Ovary (tissue), 10 donors: ENCODE measurements at regions of chr3 and their contacts with region 1.

Region 1: DNA sequence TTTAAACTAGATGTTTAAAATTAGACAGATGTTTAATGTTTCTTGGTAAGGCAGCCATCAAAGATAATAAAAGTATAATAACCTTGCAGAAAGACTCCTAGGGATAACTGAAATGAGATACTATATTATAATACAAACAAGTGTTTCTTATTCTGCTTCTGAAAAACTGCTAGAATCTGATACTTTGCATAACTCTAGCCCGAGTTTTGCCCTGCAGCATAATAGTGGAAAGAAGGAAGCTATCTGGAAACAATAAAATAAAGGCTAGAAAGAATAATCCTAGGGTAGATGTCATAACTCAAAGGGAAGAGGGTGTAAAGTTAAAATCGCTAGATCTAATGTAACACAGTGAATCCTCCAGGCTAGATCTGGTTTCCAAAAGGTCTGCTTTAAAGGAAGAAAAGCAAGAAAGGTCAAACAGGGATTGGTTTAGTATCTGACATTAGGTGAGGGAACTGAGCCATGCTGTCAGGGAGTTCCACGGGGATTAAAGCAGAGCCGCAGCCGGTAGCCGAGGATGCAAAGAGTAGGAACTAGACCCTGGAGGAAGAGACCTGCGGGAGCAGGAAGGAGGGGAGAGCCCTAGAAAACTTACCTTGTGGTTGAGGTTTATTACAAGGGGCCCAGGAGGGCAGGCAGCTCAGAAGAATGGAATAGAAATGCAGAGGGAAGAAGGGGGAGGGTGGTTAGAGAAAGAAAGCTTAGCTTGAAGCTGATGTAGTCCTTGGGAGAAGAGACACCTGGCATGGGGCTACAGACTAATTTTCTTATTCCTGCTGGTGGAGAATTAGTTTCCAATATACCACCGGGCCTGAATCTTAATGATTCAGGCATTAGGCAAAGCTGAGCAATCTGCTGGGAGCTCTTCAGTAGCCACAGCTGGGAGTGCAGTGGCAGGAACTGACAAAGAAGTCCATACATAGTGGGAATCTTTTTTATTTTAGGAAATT is 46.1 kb upstream of the TUSC7 start:
- DNase-seq: no peak
- H3K4me3 ChIP-seq: no peak overlapping the region
- H3K27ac ChIP-seq: no peak overlapping the region
- H3K4me1 ChIP-seq: no peaks in the 10 kb centered on the region
- H3K27me3 ChIP-seq: no peaks in the 10 kb centered on the region
- CTCF ChIP-seq: no peak
- EP300 ChIP-seq: no peak
- POLR2A ChIP-seq: no peak

Region 2: DNA sequence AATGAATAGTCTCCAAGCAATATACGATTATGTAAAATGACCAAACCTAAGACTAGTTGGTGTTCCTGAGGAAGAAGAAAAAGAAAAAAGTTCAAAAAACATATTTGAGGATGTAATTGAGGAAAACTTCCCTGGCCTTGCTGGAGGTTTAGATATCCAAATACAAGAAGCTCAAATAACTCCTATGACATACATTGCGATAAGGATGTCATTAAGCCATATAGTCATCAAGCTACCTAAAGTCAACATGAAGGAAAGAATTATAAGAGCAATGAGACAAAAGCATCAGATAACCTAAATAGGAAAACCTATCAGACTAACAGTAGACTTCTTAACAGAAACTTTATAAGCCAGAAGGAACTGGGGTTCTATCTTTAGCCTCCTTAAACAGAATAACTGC is 277.3 kb after region 1 on chr3:
- intact Hi-C with region 1: loop called in 1 of 4 experiments (anchors 5 kb)
- DNase-seq: no peak
- H3K4me3 ChIP-seq: no peak overlapping the region
- H3K27ac ChIP-seq: no peak overlapping the region
- H3K4me1 ChIP-seq: no peaks in the 10 kb centered on the region
- H3K27me3 ChIP-seq: no peaks in the 10 kb centered on the region
- CTCF ChIP-seq: no peak
- EP300 ChIP-seq: no peak
- POLR2A ChIP-seq: no peak